ENCODE measurements at regions of chrX and their contacts with region 1.

Region 1: GRCh38 chrX:41558531-41558930 is 111.4 kb downstream of the NYX start:
- DNase-seq: no peak
- ATAC-seq: no peak
- H3K4me3 Mint-ChIP-seq: no peak overlapping the region
- H3K27ac Mint-ChIP-seq: peak overlapping the region; percentile 87
- H3K4me1 Mint-ChIP-seq: peaks cover 48% of the 10 kb centered on the region
- H3K27me3 Mint-ChIP-seq: no peaks in the 10 kb centered on the region

Region 2: DNA sequence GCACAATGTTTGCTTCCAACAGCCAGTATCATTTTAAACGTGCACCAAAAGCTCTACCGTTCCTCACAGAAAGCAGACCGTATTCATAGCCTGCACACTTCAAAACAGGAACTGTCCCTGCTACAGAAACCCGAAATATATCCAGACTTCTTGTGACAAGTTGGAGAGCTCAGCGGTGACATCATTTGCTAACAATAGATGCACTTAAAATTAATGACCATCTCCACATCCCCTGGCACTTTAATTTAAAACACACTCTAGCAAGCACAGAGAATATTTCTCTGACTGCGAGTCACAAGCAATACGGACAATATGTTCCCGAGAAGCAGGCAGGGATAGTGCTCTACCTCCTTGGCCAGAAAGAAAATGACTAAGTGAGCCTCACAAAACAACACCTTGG is 108.9 kb before region 1 on chrX:
- CTCF ChIA-PET with region 1: no interaction called
- DNase-seq: no peak
- ATAC-seq: no peak
- H3K4me3 Mint-ChIP-seq: no peak overlapping the region
- H3K27ac Mint-ChIP-seq: peak overlapping the region; percentile 37
- H3K4me1 Mint-ChIP-seq: peaks cover 12% of the 10 kb centered on the region
- H3K27me3 Mint-ChIP-seq: no peaks in the 10 kb centered on the region

Region 3: DNA sequence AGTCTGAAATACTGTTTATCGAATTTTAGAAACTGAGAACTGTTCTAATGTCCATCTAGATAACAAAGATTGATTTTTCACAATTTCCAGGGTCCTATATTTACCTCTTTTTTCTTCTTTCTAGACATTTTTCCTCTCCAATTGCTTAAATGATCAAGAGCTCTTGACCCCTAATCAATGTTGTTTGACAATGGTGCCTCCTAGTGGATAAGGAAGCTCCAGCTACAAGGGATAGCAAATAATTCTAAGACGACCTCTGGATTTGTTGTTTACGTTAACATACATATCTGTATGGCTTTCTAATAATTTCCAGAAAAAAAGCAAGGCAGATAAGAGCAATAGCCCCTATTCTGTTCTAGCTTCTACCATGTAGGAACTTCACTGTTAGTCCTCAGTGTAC is 201.3 kb after region 1 on chrX:
- CTCF ChIA-PET with region 1: interaction called, 15 read pairs
- DNase-seq: no peak
- ATAC-seq: no peak
- H3K4me3 Mint-ChIP-seq: no peak overlapping the region
- H3K27ac Mint-ChIP-seq: no peak overlapping the region
- H3K4me1 Mint-ChIP-seq: peaks cover 2% of the 10 kb centered on the region
- H3K27me3 Mint-ChIP-seq: no peaks in the 10 kb centered on the region

Measured in activated CD8-positive, alpha-beta memory T cell treated with anti-CD3 and anti-CD28 coated beads, Interleukin-2, amount 10 ng/mL, durations not matched to agents 7 days and 5 days (primary cell).